Right ventricle myocardium inferior (tissue), 1 donor: ENCODE measurements at regions of chr1 and their contacts with region 1.

Region 1: GRCh38 chr1:47424336-47424982 is 8.4 kb downstream of the FOXE3 start:
- DNase-seq: no peak
- ATAC-seq: peak; percentile 34

Region 2: DNA sequence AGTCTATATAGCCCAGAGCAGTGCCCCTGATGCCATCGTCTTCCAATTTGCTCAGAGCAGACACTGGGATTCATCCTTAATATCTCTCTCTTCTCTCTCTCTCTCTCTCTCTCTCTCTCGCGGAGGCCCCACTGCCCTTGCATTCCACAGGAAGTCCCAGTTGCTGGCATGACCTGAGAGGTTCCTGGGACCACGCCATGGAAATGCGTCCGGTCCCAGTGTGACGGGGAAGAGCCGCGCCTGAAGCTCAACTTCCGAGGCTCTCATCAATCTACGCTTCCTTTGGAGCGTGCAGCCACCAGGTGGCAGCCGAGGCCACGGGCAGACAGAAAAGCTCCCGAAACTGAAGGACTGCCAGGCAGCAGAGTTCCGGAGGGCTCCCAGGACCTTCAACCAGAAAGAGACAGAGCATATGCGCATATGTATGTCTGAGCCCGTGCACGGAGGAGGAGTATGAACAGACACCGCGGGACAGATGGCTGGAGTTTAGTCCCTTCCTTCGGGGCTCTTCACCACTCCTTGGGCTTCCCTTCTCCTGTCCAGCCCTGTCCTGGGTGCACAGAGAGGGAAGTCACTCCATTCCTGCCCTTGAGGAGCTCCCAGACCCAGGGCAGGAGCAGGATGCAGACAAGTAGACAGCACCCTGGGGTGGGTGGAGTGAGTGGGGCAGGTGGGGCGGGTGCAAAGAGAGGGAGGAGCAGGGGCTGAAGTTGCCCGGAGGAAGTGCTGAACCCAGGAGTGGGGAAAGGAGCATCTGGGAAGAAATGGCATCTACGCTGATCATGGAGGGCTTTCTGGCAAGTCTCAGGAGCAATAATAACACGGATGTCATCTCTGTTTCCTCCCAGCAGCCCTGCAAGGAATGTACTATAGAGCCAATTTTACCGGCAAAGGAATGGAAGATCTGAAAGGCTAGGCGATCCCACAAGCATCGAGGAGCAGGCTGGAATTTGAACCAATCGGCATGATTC is 245.2 kb before region 1 on chr1:
- intact Hi-C with region 1: loop called (anchors 5 kb)
- DNase-seq: peak; percentile 92
- ATAC-seq: peak; percentile 89